ENCODE measurements at regions of chr11 and their contacts with region 1.

Region 1: DNA sequence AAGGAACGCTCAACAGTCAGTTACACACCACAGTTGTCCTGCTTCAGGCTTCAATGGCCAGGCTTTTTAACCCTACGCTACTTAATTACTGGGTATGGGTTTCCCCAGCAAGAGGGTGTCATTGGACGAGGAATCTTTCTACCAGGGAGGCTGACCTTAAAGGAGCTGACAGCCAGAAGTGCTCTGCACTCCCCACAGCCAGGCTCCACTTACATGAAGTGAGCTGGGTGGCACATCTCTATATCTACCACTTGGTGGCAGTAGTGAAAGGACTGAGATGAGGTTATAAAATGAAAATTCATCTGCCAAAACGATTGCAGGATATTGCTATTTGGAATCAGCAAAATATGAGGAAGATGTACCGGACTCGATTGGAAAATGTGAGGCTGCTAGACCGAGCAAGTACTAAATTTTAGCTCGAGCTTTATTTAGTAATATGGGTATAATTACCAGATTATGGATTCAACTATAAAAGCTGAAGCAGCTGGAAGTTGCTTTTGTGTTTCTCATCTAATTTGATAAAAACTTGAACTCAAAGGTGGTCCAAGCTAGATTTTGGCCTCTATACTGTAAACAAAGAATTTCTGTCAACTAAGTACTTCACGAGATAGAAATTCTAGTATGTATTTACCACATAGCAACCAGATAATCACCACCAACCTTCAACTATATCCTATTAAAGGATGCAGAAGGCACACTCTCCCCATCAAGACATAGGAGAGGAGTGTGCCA is 53.9 kb upstream of the CEP126 start:
- DNase-seq: peak; percentile 38 to 75
- H3K4me3 ChIP-seq: no peak overlapping the region
- H3K27ac ChIP-seq: no peak overlapping the region
- H3K4me1 ChIP-seq: peaks cover 0 to 5% (median 2%) of the 10 kb centered on the region in 4 donors
- H3K27me3 ChIP-seq: no peaks in the 10 kb centered on the region
- CTCF ChIP-seq: peak in 5 of 7 experiments; percentile 60 to 78 (median 70)
- EP300 ChIP-seq: no peak
- POLR2A ChIP-seq: no peak

Region 2: GRCh38 chr11:101436511-101437142 is 424.2 kb before region 1 on chr11:
- intact Hi-C with region 1: loop called (anchors 10 kb)
- DNase-seq: peak; percentile 55 to 62
- H3K4me3 ChIP-seq: no peak overlapping the region
- H3K27ac ChIP-seq: no peak overlapping the region
- H3K4me1 ChIP-seq: peaks cover 0 to 11% (median 6%) of the 10 kb centered on the region in 4 donors
- H3K27me3 ChIP-seq: no peaks in the 10 kb centered on the region
- CTCF ChIP-seq: peak in 4 of 7 experiments; percentile 26 to 52 (median 40)
- EP300 ChIP-seq: no peak
- POLR2A ChIP-seq: no peak

Region 3: DNA sequence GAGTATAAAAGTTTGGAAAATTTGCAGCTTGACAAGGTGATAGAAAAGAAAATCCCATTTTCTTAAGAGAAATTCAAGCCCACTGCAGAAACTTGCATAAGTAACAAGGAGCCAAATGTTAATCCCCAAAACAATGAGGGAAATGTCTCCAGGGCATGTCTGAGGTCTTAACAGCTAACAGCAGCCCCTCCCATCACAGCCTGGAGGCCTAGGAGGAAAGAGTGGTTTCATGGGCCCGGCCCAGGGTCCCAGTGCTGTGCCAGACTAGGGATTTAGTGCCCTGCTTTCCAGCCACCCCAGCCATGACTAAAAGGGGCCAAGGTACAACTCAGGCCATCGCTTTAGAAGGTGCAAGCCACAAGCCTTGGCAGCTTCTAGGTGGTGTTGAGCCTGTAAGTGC is 153.4 kb before region 1 on chr11:
- intact Hi-C with region 1: no loop called
- DNase-seq: no peak
- H3K4me3 ChIP-seq: no peak overlapping the region
- H3K27ac ChIP-seq: no peak overlapping the region
- H3K4me1 ChIP-seq: no peaks in the 10 kb centered on the region
- H3K27me3 ChIP-seq: no peaks in the 10 kb centered on the region
- CTCF ChIP-seq: no peak
- EP300 ChIP-seq: no peak
- POLR2A ChIP-seq: no peak

Region 4: GRCh38 chr11:101963236-101963635 is 102.4 kb after region 1 on chr11:
- intact Hi-C with region 1: no loop called
- DNase-seq: no peak
- H3K4me3 ChIP-seq: no peak overlapping the region
- H3K27ac ChIP-seq: no peak overlapping the region
- H3K4me1 ChIP-seq: peaks cover 0 to 3% (median 0%) of the 10 kb centered on the region in 4 donors
- H3K27me3 ChIP-seq: no peaks in the 10 kb centered on the region
- CTCF ChIP-seq: no peak
- EP300 ChIP-seq: no peak
- POLR2A ChIP-seq: no peak

Measured in stomach (tissue), 19 donors.